CD4-positive, alpha-beta memory T cell (primary cell): ENCODE measurements at regions of chr2 and their contacts with region 1.

Region 1: DNA sequence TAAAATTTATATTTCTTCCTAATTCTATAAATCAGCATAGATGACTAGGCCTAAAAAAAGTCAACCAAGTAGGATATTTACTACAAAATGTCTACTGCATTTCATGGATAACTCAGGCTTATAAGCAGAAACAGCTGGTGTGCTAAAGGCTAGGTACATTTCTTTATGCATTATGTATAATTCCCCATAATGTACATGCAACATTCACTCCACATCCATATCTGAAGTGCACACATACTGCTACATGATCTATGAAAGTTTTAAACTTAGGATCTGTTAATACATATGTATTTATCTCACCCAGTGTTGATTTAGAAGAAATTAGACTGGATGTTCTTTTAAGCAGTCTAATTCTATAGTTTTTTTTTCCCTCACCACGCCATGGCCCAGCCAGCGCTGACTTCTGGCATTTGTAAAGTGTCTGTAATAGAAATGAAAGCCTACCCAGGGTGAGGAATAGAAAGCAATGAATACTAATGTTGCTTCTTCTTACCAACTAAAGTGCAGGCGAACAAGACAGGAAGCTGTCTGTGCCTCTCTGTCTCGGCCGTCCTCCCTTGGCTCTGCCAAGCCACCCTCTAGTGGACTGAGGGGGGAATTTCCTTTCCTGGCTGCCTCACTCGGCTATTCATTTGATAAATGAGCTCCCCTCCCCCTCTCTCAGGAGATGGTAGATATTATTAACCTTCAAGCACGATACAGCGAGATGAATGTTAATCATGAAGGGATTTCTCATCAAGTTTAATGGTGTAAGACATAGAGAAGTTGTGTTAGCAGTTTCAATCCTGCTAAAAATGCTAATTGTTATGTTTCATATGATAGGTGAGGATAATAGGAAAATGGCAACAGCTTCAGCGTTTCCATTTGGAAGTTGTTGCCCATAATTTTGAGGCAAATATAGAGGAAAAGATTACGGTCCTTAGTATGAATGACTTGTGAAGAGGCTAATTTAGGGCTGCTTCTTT is 384.5 kb downstream of the MTX2 start:
- DNase-seq: peak in 2 of 5 donors; percentile 6
- H3K4me3 ChIP-seq: no peak overlapping the region
- H3K4me3 Mint-ChIP-seq: no peak overlapping the region
- H3K27ac ChIP-seq: no peak overlapping the region
- H3K27ac Mint-ChIP-seq: no peak overlapping the region
- H3K4me1 ChIP-seq: no peaks in the 10 kb centered on the region
- H3K4me1 Mint-ChIP-seq: peaks cover 0 to 6% (median 5%) of the 10 kb centered on the region in 4 donors
- H3K27me3 ChIP-seq: no peaks in the 10 kb centered on the region
- H3K27me3 Mint-ChIP-seq: peaks cover 23 to 34% of the 10 kb centered on the region in 2 donors

Region 2: DNA sequence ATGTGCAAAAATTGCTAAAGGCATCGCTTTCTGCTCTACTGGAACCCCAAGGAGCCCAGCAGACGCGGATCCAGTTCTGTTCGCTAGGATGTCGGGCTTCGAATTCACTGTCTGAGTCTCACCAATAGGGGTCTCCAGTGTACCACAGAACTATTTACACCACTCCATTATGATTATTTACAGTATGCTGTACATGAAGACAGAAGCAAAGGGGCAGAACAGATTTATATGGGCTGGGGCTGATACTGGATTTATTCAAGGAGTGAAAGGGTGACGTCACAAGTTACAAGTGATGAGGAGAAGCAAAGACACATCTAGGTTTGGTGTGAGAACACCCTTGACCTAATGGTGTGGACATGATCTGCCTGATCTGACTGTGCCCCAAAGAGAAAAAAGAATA is 1286.9 kb before region 1 on chr2:
- CTCF ChIA-PET with region 1: no interaction called
- POLR2A ChIA-PET with region 1: no interaction called
- intact Hi-C with region 1: loop called (anchors 2 kb)
- DNase-seq: peak in 3 of 5 donors; percentile 4 to 15 (median 15)
- H3K4me3 ChIP-seq: no peak overlapping the region
- H3K4me3 Mint-ChIP-seq: no peak overlapping the region
- H3K27ac ChIP-seq: no peak overlapping the region
- H3K27ac Mint-ChIP-seq: no peak overlapping the region
- H3K4me1 ChIP-seq: no peaks in the 10 kb centered on the region
- H3K4me1 Mint-ChIP-seq: no peaks in the 10 kb centered on the region
- H3K27me3 ChIP-seq: no peaks in the 10 kb centered on the region
- H3K27me3 Mint-ChIP-seq: peaks cover 5 to 21% of the 10 kb centered on the region in 2 donors

Region 3: DNA sequence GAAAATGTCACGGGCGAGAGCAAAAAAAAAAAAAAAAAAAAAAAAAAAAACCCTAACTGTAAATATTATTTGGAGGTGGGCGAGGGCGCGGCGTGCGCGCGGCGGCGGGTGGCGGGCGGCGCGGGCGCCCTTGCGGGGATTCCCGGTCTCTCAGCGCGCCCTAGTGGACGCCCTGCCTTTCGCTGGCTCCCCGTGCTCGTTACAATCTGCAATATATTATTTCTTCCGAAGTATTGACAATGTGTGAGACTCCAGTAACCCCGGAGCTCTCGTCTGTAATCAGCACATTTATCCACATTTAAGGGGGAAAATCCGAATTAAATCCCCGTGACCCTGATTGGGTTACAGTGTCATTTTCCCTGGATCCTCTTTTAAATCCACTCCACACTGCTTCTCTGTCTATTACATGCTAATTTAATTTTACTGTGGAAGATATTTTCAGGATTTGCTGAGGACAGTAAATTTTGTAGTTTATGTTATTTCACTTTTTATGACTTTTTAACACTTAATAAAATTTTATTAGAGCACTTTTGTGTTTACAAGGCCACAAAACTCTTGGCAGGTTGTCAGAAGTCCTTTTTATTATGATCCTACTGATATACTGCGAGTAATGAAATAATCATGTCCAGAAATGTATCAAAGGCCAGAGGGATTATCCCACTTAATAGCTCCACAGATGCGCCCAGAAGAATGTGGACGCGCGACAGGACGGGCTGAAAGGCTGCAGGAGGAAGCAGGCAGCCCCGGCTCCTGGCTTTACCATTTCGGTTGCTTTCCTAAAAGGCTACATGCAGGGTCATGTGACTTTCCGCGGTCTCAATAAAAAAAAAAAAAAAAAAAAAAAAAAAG is 15.4 kb before region 1 on chr2:
- CTCF ChIA-PET with region 1: interaction called, 43 read pairs
- POLR2A ChIA-PET with region 1: no interaction called
- intact Hi-C with region 1: no loop called
- DNase-seq: peak in 4 of 5 donors; percentile 30 to 38 (median 37)
- H3K4me3 ChIP-seq: peak overlapping the region in 1 of 2 donors; percentile 41
- H3K4me3 Mint-ChIP-seq: peak overlapping the region; percentile 55 to 82 (median 68)
- H3K27ac ChIP-seq: no peak overlapping the region
- H3K27ac Mint-ChIP-seq: no peak overlapping the region
- H3K4me1 ChIP-seq: peaks cover 3% of the 10 kb centered on the region
- H3K4me1 Mint-ChIP-seq: peaks cover 0 to 11% (median 3%) of the 10 kb centered on the region in 4 donors
- H3K27me3 ChIP-seq: peaks cover 20% of the 10 kb centered on the region
- H3K27me3 Mint-ChIP-seq: peaks cover 37 to 52% of the 10 kb centered on the region in 2 donors

Region 4: DNA sequence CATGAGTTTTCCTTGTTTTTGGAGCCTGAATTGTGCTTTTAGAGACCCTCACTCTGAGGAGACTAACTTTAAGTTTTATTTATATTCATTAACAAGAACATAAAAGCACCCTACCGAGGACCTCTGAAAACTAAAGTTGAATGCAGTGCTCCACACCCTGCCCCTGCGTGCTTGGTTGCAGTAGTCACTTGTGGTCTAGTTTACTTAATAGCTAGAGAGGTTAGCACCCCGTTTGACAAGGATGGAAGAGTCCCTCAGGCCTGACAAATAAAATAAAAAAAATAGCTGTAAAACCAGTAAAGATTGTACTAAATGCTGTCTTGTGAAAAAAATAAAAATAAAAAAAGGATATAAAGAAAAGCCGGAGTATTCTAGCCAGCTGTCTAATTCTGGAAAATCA is 10.7 kb after region 1 on chr2:
- CTCF ChIA-PET with region 1: interaction called, 20 read pairs
- POLR2A ChIA-PET with region 1: no interaction called
- intact Hi-C with region 1: no loop called
- DNase-seq: no peak
- H3K4me3 ChIP-seq: no peak overlapping the region
- H3K4me3 Mint-ChIP-seq: no peak overlapping the region
- H3K27ac ChIP-seq: no peak overlapping the region
- H3K27ac Mint-ChIP-seq: no peak overlapping the region
- H3K4me1 ChIP-seq: no peaks in the 10 kb centered on the region
- H3K4me1 Mint-ChIP-seq: no peaks in the 10 kb centered on the region
- H3K27me3 ChIP-seq: no peaks in the 10 kb centered on the region
- H3K27me3 Mint-ChIP-seq: peaks cover 12 to 34% of the 10 kb centered on the region in 2 donors

Region 5: GRCh38 chr2:176669398-176670174 is 15.8 kb after region 1 on chr2:
- CTCF ChIA-PET with region 1: interaction called, 20 read pairs
- POLR2A ChIA-PET with region 1: no interaction called
- intact Hi-C with region 1: no loop called
- DNase-seq: no peak
- H3K4me3 ChIP-seq: no peak overlapping the region
- H3K4me3 Mint-ChIP-seq: no peak overlapping the region
- H3K27ac ChIP-seq: no peak overlapping the region
- H3K27ac Mint-ChIP-seq: no peak overlapping the region
- H3K4me1 ChIP-seq: no peaks in the 10 kb centered on the region
- H3K4me1 Mint-ChIP-seq: no peaks in the 10 kb centered on the region
- H3K27me3 ChIP-seq: no peaks in the 10 kb centered on the region
- H3K27me3 Mint-ChIP-seq: peaks cover 10 to 11% of the 10 kb centered on the region in 2 donors